Head of caudate nucleus (tissue), 42 donors: ENCODE measurements at regions of chr14 and their contacts with region 1.

Region 1: GRCh38 chr14:75176142-75176820 is at the start of gene TMED10:
- DNase-seq: peak; percentile 78 to 97 (median 91)

Region 2: DNA sequence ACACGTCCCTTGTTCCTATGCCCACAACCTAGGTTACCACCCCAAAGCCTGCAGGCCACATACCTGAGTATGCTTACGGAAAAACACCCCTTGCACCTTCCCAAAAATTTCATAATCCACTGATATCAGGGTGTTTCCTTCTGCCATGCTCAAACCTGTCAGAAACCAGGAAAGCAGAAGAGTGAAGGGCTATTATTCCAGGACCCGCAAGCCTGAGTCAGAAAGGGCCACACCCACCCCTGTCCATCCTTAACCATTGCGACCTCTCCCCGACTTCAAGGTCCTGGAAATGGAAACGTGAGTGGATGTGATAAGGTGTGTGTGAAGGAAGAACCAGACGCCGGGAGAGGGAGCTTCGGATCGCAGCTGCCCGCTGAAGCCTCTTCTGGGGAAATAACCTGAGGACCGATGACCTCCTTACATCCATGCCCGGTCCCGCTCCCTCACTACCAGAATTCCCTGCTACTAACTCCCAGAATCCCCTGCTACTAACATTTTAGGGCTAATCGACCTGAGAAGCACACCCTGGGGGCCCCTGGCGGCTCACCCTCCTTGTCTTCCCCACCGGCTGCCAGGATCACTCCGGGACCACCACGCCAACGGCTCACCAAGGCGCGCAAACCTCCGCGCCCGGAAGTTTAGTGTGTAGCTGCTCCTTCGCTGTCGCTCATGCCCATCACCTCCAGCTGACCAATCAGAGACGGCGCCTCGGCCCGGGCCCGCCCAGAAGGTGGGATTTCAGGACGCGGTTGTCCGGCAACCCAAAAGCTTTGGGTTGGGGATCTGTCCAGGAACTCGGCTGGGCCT is 112.7 kb before region 1 on chr14 and contains the start of gene ACYP1:
- intact Hi-C with region 1: no loop called
- DNase-seq: peak; percentile 88 to 97 (median 94)

Region 3: DNA sequence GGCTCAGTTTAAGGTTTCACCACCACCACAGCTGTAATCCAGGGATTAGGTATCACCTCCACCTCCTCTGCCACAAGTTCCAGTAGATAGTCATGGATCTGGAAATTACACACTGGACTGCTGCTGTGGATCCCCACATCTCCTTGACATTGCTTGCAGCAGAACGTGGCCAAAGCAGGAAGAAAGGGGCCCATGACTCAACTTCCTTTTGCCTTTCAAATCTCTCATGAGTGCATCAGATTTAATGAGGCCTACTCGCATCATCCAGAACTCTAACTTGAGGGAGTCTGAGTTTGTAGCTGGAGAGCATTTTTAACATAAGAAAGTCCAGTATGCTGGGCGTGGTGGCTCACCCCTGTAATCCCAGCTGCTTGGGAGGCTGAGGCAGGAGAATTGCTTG is 29.3 kb after region 1 on chr14:
- intact Hi-C with region 1: no loop called
- DNase-seq: no peak

Region 4: DNA sequence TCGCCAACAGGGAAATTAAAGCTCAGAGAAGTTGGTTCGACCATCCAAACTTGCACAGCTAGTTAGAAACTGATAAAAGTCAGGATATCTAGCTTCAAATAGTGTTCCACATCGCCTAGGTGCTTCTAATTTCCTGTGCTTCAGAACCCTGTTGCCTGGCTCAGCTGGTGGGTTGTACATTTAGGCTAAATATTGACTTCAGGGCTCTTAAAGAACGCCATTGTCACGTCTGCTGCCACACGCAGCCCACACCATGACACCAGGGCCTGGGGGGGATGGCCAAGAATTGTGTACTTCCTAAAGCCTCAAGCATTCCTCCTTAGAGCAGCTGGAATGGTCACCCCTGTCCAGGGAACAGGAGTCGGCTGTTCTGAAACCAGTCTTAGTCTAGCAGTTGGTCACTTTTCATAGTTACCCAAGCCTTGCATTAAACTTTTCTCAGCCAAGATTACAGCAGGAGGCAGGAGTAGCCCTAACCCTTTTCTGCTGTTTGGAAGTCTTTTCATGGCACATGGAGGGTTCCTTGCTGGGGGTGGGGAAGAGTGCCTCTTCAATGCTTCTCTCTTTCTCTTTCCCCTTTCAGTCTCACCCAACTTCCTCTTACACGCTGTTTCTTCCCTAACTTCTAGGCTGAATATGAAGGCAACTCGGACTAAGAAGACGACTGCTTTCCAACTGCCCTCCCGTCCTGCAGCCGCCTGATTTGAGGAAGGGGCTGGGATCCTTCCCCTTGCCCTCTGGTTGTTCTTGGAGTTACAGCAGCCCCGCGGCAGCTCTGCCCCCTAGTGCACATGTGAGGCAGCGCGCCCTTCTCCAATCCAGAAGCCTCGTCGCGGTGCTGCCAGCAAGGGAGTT is 119.4 kb after region 1 on chr14:
- intact Hi-C with region 1: loop called (anchors 2 kb)
- DNase-seq: peak; percentile 77 to 95 (median 87)

Region 5: GRCh38 chr14:75560962-75561432 is 384.7 kb after region 1 on chr14:
- intact Hi-C with region 1: no loop called
- DNase-seq: peak; percentile 58 to 90 (median 74)